Testis (tissue), 5 donors: ENCODE measurements at regions of chr1 and their contacts with region 1.

Region 1: DNA sequence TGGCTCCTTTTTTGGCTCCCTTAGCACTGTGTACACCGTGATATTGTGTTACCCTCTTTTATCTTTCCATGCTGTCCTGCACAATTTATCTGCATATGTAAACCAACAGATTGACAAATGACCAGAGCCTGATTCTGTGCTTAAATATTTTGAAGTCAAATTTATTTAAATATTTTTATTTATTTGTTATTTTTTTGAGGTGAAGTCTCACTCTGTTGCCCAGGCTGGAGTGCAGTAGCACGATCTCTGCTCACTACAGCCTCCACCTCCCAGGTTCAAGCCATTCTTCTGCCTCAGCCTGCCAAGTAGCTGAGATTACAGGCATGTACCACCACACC is 12.8 kb downstream of the PMF1 start:
- DNase-seq: no peak
- H3K4me3 ChIP-seq: no peak overlapping the region
- H3K27ac ChIP-seq: no peak overlapping the region
- H3K4me1 ChIP-seq: no peaks in the 10 kb centered on the region
- H3K27me3 ChIP-seq: no peaks in the 10 kb centered on the region
- CTCF ChIP-seq: no peak
- POLR2A ChIP-seq: no peak

Region 2: DNA sequence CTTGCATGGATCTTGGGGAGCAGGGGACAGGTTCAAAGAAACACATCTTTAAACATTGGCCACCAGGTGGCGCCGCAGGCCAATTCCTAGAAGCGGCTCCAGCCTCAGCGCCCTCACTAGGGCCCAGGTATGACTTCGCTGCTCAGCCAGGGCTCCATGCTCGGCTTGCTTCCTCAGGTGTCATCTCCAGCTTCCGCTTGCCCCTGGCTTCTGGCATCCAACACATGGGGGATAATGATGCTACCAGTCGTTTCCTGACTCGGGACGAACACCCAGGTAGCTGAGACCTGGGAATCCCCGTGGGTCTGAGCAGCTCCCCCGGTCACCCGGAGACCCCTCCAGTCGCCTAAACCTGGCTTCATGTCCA is 134.8 kb before region 1 on chr1:
- intact Hi-C with region 1: loop called (anchors 5 kb)
- DNase-seq: peak; percentile 92
- H3K4me3 ChIP-seq: no peak overlapping the region
- H3K27ac ChIP-seq: no peak overlapping the region
- H3K4me1 ChIP-seq: peaks cover 12% of the 10 kb centered on the region
- H3K27me3 ChIP-seq: no peaks in the 10 kb centered on the region
- CTCF ChIP-seq: peak; percentile 82 to 95 (median 85)
- POLR2A ChIP-seq: no peak

Region 3: DNA sequence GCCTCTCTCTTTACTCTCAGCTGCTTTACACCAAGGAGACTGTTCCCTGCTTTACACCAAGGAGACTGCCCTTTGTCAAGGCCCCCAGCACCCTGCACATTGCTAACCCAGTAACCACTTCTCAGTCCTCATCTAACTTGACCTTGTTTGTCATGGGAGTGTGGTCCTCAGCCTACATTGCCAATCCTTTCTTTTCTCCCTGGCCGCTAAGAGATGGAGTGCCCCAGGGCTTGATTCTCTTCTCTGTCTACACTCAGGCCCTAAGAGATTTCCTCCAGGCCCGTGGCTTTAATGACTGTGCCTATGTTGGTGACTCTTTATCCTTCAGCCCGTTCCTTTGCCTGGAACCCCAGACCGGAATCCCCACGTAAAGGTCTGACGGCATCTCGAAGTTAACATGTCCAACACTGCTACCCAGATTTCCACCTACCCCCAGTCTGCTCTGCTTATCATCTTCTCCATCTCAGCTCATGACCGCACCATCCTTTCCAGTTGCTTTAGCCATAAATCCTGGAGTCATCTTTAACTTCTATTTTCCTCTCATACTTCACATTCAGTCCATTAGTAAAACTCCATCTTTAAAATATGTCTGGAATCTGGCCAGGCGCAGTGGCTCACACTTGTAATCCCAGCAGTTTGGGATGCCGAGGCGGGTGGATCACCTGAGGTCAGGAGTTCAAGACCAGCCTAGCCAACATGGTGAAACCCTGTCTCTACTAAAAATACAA is 81.7 kb before region 1 on chr1:
- intact Hi-C with region 1: loop called (anchors 2 kb)
- DNase-seq: no peak
- H3K4me3 ChIP-seq: no peak overlapping the region
- H3K27ac ChIP-seq: no peak overlapping the region
- H3K4me1 ChIP-seq: peaks cover 16% of the 10 kb centered on the region
- H3K27me3 ChIP-seq: no peaks in the 10 kb centered on the region
- CTCF ChIP-seq: no peak
- POLR2A ChIP-seq: no peak

Region 4: GRCh38 chr1:156172696-156173470 is 52.8 kb before region 1 on chr1:
- intact Hi-C with region 1: no loop called
- DNase-seq: no peak
- H3K4me3 ChIP-seq: no peak overlapping the region
- H3K27ac ChIP-seq: no peak overlapping the region
- H3K4me1 ChIP-seq: no peaks in the 10 kb centered on the region
- H3K27me3 ChIP-seq: no peaks in the 10 kb centered on the region
- CTCF ChIP-seq: no peak
- POLR2A ChIP-seq: no peak

Region 5: DNA sequence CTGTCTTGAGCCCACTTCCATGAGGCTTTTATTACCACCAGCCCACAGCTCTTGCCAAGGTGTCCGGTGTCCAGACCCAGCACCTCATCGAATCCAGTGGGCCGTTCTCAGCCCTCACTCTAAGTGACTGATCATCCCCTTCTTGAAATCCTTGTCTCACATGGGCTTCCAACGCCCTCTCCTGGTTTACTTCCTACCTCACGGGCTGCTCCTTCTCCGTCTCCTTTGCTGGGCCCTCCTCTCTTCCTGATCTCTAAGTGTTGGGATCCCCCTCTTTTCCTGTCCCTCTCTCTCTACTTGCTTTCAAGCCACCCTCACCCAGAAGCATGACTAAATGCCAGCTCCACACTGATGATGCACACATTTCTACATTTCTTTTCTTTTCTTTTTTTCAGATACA is 134.3 kb after region 1 on chr1:
- intact Hi-C with region 1: no loop called
- DNase-seq: peak; percentile 42
- H3K4me3 ChIP-seq: no peak overlapping the region
- H3K27ac ChIP-seq: no peak overlapping the region
- H3K4me1 ChIP-seq: no peaks in the 10 kb centered on the region
- H3K27me3 ChIP-seq: no peaks in the 10 kb centered on the region
- CTCF ChIP-seq: no peak
- POLR2A ChIP-seq: no peak